Right cardiac atrium (tissue), 5 donors: ENCODE measurements at regions of chr2 and their contacts with region 1.

Region 1: DNA sequence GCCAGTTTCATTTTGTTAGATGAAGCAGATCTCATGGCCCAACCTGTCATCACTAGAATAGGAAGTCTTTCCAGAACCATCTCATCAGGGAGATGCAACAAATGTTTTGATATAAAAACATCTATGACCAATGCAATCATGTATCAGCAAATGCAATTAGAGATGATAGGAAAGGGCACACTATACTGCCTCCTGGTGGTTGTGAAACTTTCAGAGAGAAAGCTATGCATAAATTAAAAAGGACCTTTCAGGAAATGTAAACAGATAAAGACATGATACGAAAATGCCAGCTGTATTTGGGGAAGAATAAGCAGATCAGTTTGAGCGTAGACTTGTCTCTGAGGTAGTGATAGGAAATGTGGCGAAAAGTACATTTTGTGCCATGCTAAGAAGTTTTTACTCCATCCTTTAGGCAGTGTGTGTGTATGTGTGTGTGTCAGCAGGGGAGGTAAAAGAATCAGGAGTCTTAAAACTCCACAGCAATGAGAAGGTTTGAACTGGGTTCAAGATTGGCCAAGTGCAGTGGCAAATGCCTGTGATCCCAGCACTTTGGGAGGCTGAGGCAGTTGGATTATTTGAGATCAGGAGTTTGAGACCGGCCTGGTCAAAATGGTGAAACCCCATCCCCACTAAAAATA is 479.3 kb downstream of the CPS1 start:
- DNase-seq: no peak
- ATAC-seq: no peak
- H3K4me3 ChIP-seq: no peak overlapping the region
- H3K27ac ChIP-seq: no peak overlapping the region
- H3K4me1 ChIP-seq: no peaks in the 10 kb centered on the region
- H3K27me3 ChIP-seq: no peaks in the 10 kb centered on the region

Region 2: GRCh38 chr2:210655229-210655975 is 380.3 kb before region 1 on chr2:
- intact Hi-C with region 1: loop called in 3 of 4 experiments (anchors 5 kb)
- DNase-seq: no peak
- ATAC-seq: no peak
- H3K4me3 ChIP-seq: no peak overlapping the region
- H3K27ac ChIP-seq: no peak overlapping the region
- H3K4me1 ChIP-seq: no peaks in the 10 kb centered on the region
- H3K27me3 ChIP-seq: no peaks in the 10 kb centered on the region

Region 3: GRCh38 chr2:210663631-210664089 is 372.0 kb before region 1 on chr2:
- intact Hi-C with region 1: loop called in 3 of 4 experiments (anchors 5 kb)
- DNase-seq: no peak
- ATAC-seq: peak in 1 of 2 donors; percentile 29
- H3K4me3 ChIP-seq: no peak overlapping the region
- H3K27ac ChIP-seq: no peak overlapping the region
- H3K4me1 ChIP-seq: no peaks in the 10 kb centered on the region
- H3K27me3 ChIP-seq: no peaks in the 10 kb centered on the region

Region 4: GRCh38 chr2:211132586-211132985 is 96.9 kb after region 1 on chr2:
- intact Hi-C with region 1: no loop called
- DNase-seq: no peak
- ATAC-seq: no peak
- H3K4me3 ChIP-seq: no peak overlapping the region
- H3K27ac ChIP-seq: no peak overlapping the region
- H3K4me1 ChIP-seq: no peaks in the 10 kb centered on the region
- H3K27me3 ChIP-seq: no peaks in the 10 kb centered on the region